Activated naive CD4-positive, alpha-beta T cell treated with anti-CD3 and anti-CD28 coated beads for 36 hours (primary cell): ENCODE measurements at regions of chr5 and their contacts with region 1.

Region 1: DNA sequence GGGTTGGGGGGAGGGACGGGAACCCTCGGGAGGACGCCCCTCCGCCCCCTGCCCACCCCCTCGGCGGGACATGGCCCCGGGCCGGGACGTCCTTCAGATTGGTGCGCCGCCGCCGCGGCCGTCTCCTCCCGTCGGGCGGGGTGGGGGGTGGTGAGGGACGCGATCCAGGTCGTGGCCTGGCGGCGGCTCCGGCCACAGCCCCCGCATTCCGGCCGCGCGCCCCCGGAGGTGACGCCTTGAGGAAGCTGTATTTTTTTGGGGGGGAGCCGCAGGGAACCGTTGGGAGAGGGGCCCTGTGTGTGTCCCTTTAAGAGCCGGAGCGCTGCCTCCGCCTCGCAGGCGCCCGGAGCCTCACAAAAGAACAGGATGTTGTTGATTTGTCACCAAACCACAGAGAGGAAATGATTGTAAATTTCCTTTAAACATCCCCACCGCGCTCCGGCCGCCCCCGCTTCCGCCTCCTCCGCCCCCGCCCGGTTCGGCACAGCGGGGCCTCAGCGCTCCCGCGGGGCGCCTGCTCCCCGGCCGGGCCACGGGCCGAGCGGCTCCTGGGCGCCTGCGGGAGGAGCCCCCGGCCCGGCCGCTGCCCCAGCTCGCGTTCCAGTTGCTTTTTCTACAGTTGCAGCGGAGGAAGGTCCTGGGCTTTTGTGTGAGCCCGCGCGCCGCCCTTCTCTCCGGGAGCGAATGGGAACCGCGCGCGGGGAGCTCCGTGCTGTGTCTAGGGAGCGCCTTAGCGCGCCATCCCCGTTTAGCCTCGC is 32.1 kb upstream of the SPRY4 start:
- DNase-seq: peak; percentile 93
- H3K4me3 Mint-ChIP-seq: peak overlapping the region; percentile 77
- H3K27ac Mint-ChIP-seq: peak overlapping the region; percentile 94
- H3K4me1 Mint-ChIP-seq: peaks cover 52% of the 10 kb centered on the region
- H3K27me3 Mint-ChIP-seq: no peaks in the 10 kb centered on the region

Region 2: DNA sequence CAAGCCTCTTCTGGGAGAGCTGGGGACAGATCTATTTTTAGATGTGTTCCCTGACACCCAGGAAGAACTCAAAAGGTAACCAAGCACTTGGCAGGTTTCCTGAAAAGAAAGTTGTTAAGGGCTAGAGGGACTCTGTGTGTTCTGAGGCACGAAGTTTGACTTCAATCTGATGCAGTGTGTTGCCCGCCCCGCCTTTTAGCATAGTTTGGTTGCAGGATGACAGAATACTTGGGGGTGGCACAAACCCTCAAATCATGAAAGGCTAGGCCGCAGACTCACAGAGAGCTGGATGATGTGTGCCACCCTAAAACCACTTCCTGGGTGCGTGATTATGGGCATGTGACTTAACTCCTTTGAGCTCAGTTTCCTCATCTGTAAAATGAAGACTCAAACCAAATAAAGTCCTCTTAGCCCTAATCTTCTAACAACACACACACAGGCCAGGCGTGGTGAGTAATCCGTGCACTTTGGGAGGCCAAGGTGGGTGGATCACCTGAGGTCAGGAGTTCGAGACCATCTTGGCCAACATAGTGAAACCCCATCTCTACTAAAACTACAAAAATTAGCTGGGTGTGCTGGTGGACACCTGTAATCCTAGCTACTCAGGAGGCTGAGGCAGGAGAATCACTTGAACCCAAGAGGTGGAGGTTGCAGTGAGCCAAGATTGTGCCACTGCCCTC is 261.1 kb before region 1 on chr5:
- CTCF ChIA-PET with region 1: no interaction called
- intact Hi-C with region 1: loop called (anchors 5 kb)
- DNase-seq: peak; percentile 95
- H3K4me3 Mint-ChIP-seq: peak overlapping the region; percentile 48
- H3K27ac Mint-ChIP-seq: peak overlapping the region; percentile 96
- H3K4me1 Mint-ChIP-seq: peaks cover 81% of the 10 kb centered on the region
- H3K27me3 Mint-ChIP-seq: no peaks in the 10 kb centered on the region

Region 3: DNA sequence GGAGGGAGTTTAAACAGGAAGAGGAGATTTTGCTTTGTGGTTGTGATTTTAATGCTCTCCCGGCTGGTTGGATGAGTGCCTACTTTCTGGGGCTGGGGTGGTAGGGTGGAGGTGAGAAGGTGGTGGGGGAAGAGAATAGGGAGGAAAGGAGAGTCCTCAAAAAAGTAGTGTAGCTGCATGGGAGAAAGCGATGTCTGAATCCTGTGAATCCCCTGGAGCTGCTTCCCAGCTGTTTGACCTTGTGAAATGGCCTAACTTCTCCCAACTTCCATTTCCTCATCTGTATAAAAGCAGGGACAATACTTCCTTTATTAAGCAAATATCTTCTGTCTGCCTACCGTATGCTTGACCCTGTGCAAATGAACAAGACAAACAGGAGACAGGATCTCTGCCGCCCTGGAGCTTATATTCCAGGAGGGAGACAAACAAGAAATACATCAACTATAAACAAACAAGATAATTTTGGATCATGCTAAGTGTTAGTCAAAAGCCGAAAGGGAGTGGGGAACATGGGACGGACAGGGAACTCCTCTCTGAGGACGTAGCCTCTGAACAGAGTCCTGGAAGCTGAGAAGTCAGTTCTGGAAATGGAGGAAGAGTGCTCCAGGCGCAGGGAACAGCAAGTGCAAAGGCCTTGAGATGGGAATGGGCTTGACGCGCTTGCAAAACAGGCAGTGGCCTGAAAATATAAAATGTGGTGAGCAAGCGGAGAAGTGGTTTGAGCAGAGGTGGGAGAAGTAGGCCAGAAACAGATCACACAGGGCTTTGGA is 135.6 kb before region 1 on chr5:
- CTCF ChIA-PET with region 1: no interaction called
- intact Hi-C with region 1: loop called (anchors 1 kb)
- DNase-seq: no peak
- H3K4me3 Mint-ChIP-seq: no peak overlapping the region
- H3K27ac Mint-ChIP-seq: no peak overlapping the region
- H3K4me1 Mint-ChIP-seq: peaks cover 32% of the 10 kb centered on the region
- H3K27me3 Mint-ChIP-seq: peaks cover 2% of the 10 kb centered on the region

Region 4: DNA sequence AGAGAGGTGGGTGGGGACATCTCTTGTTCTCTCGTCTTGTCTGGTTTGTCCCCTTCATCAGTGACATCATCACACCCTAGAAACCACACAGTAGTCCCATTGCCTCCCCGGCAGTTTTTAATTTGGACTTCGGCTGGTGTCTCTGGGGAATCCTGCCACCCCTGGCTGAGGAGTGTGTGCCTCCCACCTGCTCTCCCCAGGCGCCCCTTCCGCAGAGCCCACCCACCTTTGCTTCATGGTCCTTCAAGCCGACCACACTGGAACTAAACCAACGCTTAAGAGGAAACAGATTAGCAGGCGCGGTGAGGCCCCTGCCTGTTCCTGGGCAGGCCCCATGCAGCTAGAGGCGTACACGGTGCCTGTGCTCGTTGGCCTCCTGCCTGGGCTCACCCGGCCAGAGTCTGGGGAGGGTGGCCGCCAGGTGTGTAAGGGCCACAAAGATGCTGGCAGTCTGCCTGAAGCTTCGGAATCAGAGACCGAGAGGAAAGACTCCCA is 75.5 kb after region 1 on chr5:
- CTCF ChIA-PET with region 1: no interaction called
- intact Hi-C with region 1: loop called (anchors 2 kb)
- DNase-seq: peak; percentile 56
- H3K4me3 Mint-ChIP-seq: peak overlapping the region; percentile 16
- H3K27ac Mint-ChIP-seq: peak overlapping the region; percentile 71
- H3K4me1 Mint-ChIP-seq: peaks cover 26% of the 10 kb centered on the region
- H3K27me3 Mint-ChIP-seq: no peaks in the 10 kb centered on the region

Region 5: DNA sequence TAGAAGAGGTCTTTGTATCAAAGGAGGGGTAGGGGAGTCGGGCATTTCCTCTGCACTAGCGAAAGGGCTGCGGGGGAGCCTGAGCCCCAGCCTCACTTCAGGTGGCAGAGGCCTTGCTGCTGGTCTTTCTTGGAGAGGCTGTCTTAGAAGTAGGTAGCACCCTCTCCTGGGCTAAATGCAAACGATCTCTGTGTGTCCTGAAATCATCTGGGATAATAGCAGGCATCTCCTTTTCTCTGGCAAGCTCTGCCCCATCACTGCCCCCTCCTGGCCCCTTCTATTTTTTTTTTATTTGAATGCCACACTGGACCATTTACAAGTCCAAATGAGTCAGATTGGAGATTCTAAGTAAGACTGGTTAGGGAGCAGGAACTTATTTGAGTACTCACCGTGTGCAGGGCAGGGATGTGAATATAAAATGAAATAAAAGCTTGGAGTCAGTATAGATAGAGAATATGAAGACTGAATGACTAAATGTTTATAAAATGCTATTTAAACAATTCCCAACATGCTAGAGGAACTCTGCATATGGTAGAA is 191.9 kb after region 1 on chr5:
- CTCF ChIA-PET with region 1: interaction called, 3 read pairs
- intact Hi-C with region 1: loop called (anchors 5 kb)
- DNase-seq: peak; percentile 57
- H3K4me3 Mint-ChIP-seq: no peak overlapping the region
- H3K27ac Mint-ChIP-seq: no peak overlapping the region
- H3K4me1 Mint-ChIP-seq: peaks cover 13% of the 10 kb centered on the region
- H3K27me3 Mint-ChIP-seq: peaks cover 19% of the 10 kb centered on the region